Naive thymus-derived CD4-positive, alpha-beta T cell (primary cell): ENCODE measurements at regions of chr1 and their contacts with region 1.

Region 1: GRCh38 chr1:77759071-77760028 is at the start of gene USP33:
- DNase-seq: peak; percentile 87 to 98 (median 92)
- ATAC-seq: peak; percentile 98
- H3K4me3 ChIP-seq: peak within 1 kb of the TSS; percentile 61
- H3K4me3 Mint-ChIP-seq: peak within 1 kb of the TSS; percentile 93 to 98 (median 96)
- H3K27ac ChIP-seq: peak within 1 kb of the TSS; percentile 86
- H3K27ac Mint-ChIP-seq: peak within 1 kb of the TSS; percentile 84 to 97 (median 94)
- H3K4me1 ChIP-seq: peaks cover 24 to 25% of the 10 kb centered on the region in 2 donors
- H3K4me1 Mint-ChIP-seq: peaks cover 28 to 64% (median 43%) of the 10 kb centered on the region in 7 donors
- H3K27me3 ChIP-seq: no peaks in the 10 kb centered on the region
- H3K27me3 Mint-ChIP-seq: peaks cover 0 to 10% (median 0%) of the 10 kb centered on the region in 5 donors
- total RNA-seq, gene USP33: 54.0 to 101 (median 86.4) TPM

Region 2: GRCh38 chr1:76294482-76295194 is 1464.7 kb before region 1 on chr1:
- CTCF ChIA-PET with region 1: no interaction called
- POLR2A ChIA-PET with region 1: no interaction called
- intact Hi-C with region 1: loop called in 1 of 2 experiments (anchors 10 kb)
- DNase-seq: peak in 5 of 9 donors; percentile 21 to 59 (median 49)
- ATAC-seq: peak; percentile 62
- H3K4me3 ChIP-seq: peak overlapping the region; percentile 7
- H3K4me3 Mint-ChIP-seq: peak overlapping the region; percentile 27 to 83 (median 69)
- H3K27ac ChIP-seq: peak overlapping the region; percentile 41
- H3K27ac Mint-ChIP-seq: peak overlapping the region; percentile 63 to 88 (median 81)
- H3K4me1 ChIP-seq: peaks cover 41 to 63% of the 10 kb centered on the region in 2 donors
- H3K4me1 Mint-ChIP-seq: peaks cover 21 to 93% (median 77%) of the 10 kb centered on the region in 7 donors
- H3K27me3 ChIP-seq: no peaks in the 10 kb centered on the region
- H3K27me3 Mint-ChIP-seq: peaks cover 0 to 2% (median 0%) of the 10 kb centered on the region in 5 donors

Region 3: GRCh38 chr1:77281491-77282186 is 477.7 kb before region 1 on chr1 and contains the start of gene AK5:
- CTCF ChIA-PET with region 1: no interaction called
- POLR2A ChIA-PET with region 1: no interaction called
- intact Hi-C with region 1: loop called in 1 of 2 experiments (anchors 5 kb)
- DNase-seq: peak; percentile 32 to 60 (median 53)
- ATAC-seq: peak; percentile 76
- H3K4me3 ChIP-seq: peak within 1 kb of the TSS; percentile 74
- H3K4me3 Mint-ChIP-seq: peak within 1 kb of the TSS; percentile 75 to 95 (median 92)
- H3K27ac ChIP-seq: peak within 1 kb of the TSS; percentile 67
- H3K27ac Mint-ChIP-seq: peak within 1 kb of the TSS in 8 of 9 donors; percentile 76 to 95 (median 84)
- H3K4me1 ChIP-seq: peaks cover 0 to 31% of the 10 kb centered on the region in 2 donors
- H3K4me1 Mint-ChIP-seq: peaks cover 29 to 72% (median 59%) of the 10 kb centered on the region in 7 donors
- H3K27me3 ChIP-seq: no peaks in the 10 kb centered on the region
- H3K27me3 Mint-ChIP-seq: peaks cover 0 to 46% (median 0%) of the 10 kb centered on the region in 5 donors
- total RNA-seq, gene AK5: 1.7 to 59.4 (median 41.0) TPM

Region 4: DNA sequence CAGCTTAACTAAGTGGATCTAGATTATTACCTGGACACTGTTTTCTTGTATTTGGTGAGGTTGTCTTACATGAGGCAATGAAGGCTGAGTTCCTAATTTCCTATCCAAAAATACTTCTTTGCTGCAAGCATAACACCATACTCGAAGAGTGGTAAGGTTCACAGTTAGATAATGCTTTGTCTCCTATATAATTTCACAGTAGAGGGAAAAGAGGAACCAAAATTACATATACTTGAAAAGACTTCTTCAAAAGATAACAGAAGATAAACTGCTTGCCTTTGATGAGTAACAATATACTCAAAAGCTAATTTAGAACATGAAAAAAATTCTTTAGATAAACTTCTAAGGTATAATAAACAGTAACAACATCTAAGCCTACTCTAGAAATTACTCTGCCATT is 20.1 kb before region 1 on chr1:
- CTCF ChIA-PET with region 1: no interaction called
- POLR2A ChIA-PET with region 1: no interaction called
- intact Hi-C with region 1: loop called in 1 of 2 experiments (anchors 2 kb)
- DNase-seq: no peak
- ATAC-seq: no peak
- H3K4me3 ChIP-seq: no peak overlapping the region
- H3K4me3 Mint-ChIP-seq: no peak overlapping the region
- H3K27ac ChIP-seq: no peak overlapping the region
- H3K27ac Mint-ChIP-seq: no peak overlapping the region
- H3K4me1 ChIP-seq: no peaks in the 10 kb centered on the region
- H3K4me1 Mint-ChIP-seq: peaks cover 0 to 18% (median 9%) of the 10 kb centered on the region in 7 donors
- H3K27me3 ChIP-seq: no peaks in the 10 kb centered on the region
- H3K27me3 Mint-ChIP-seq: no peaks in the 10 kb centered on the region

Region 5: DNA sequence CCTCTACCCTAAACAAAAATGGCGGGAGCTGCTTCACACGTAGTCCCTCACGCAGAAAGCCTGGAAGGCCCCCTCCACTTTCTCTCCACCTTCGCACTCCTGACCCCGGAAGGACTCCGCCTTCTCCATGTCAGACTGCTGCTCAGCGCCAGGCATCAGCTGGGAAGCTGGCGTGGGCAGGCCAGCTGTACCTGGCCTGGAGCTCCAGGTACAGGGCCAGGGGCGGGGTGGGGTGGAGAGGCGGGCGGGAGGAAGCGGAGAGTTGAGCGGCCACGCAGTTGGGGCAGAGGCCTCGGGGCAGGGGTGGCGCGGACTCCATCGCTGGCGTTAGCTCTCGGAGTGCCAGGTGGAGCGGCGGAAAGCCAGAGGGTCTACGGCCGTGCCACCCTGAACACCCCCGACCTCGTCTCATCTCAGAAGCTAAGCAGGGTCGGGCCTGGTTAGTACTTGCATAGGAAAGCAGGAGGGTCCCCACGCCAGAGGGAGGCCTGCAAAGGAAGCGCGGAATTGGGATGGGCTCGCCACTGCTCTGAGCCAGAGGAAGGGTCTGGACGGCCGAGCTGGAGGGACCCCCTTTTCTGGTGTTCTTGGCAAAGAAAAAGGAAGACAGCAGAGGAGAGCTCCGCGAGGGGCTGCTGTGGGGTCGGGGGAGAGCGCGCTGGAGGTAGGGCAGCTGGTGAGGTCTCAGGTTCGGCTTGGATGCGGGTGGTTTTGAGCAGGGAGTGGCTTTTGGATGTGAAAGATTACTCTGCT is 20.4 kb after region 1 on chr1 and contains the start of gene MIGA1:
- CTCF ChIA-PET with region 1: no interaction called
- POLR2A ChIA-PET with region 1: interaction called, 10 read pairs
- intact Hi-C with region 1: loop called (anchors 1 kb)
- DNase-seq: peak; percentile 61 to 92 (median 86)
- ATAC-seq: peak; percentile 99
- H3K4me3 ChIP-seq: peak within 1 kb of the TSS; percentile 68
- H3K4me3 Mint-ChIP-seq: peak within 1 kb of the TSS; percentile 90 to 98 (median 94)
- H3K27ac ChIP-seq: peak within 1 kb of the TSS; percentile 87
- H3K27ac Mint-ChIP-seq: peak within 1 kb of the TSS; percentile 88 to 96 (median 93)
- H3K4me1 ChIP-seq: peaks cover 11 to 15% of the 10 kb centered on the region in 2 donors
- H3K4me1 Mint-ChIP-seq: peaks cover 21 to 54% (median 49%) of the 10 kb centered on the region in 7 donors
- H3K27me3 ChIP-seq: no peaks in the 10 kb centered on the region
- H3K27me3 Mint-ChIP-seq: peaks cover 0 to 3% (median 0%) of the 10 kb centered on the region in 5 donors
- total RNA-seq, gene MIGA1: 12.1 to 23.5 (median 15.9) TPM

Region 6: GRCh38 chr1:77794550-77794949 is 35.2 kb after region 1 on chr1:
- CTCF ChIA-PET with region 1: no interaction called
- POLR2A ChIA-PET with region 1: no interaction called
- intact Hi-C with region 1: loop called in 1 of 2 experiments (anchors 5 kb)
- DNase-seq: no peak
- ATAC-seq: no peak
- H3K4me3 ChIP-seq: no peak overlapping the region
- H3K4me3 Mint-ChIP-seq: no peak overlapping the region
- H3K27ac ChIP-seq: no peak overlapping the region
- H3K27ac Mint-ChIP-seq: peak overlapping the region in 1 of 9 donors; percentile 2
- H3K4me1 ChIP-seq: no peaks in the 10 kb centered on the region
- H3K4me1 Mint-ChIP-seq: peaks cover 4 to 41% (median 33%) of the 10 kb centered on the region in 7 donors
- H3K27me3 ChIP-seq: no peaks in the 10 kb centered on the region
- H3K27me3 Mint-ChIP-seq: no peaks in the 10 kb centered on the region

Region 7: GRCh38 chr1:78004719-78005447 is 245.5 kb after region 1 on chr1 and contains the start of gene DNAJB4:
- CTCF ChIA-PET with region 1: no interaction called
- POLR2A ChIA-PET with region 1: interaction called, 8 read pairs
- intact Hi-C with region 1: loop called (anchors 1 kb)
- DNase-seq: peak in 8 of 9 donors; percentile 30 to 92 (median 87)
- ATAC-seq: peak; percentile 99
- H3K4me3 ChIP-seq: peak within 1 kb of the TSS; percentile 57
- H3K4me3 Mint-ChIP-seq: peak within 1 kb of the TSS; percentile 87 to 99 (median 92)
- H3K27ac ChIP-seq: peak within 1 kb of the TSS; percentile 95
- H3K27ac Mint-ChIP-seq: peak within 1 kb of the TSS; percentile 92 to 100 (median 99)
- H3K4me1 ChIP-seq: peaks cover 8 to 17% of the 10 kb centered on the region in 2 donors
- H3K4me1 Mint-ChIP-seq: peaks cover 9 to 57% (median 53%) of the 10 kb centered on the region in 7 donors
- H3K27me3 ChIP-seq: no peaks in the 10 kb centered on the region
- H3K27me3 Mint-ChIP-seq: peaks cover 0 to 3% (median 0%) of the 10 kb centered on the region in 5 donors
- total RNA-seq, gene DNAJB4: 11.4 to 20.1 (median 18.2) TPM